ENCODE measurements at regions of chr9 and their contacts with region 1.

Region 1: GRCh38 chr9:112898872-112899311 is 8.2 kb upstream of the SLC46A2 start:
- DNase-seq: no peak
- H3K4me3 Mint-ChIP-seq: no peak overlapping the region
- H3K27ac Mint-ChIP-seq: no peak overlapping the region
- H3K4me1 Mint-ChIP-seq: peaks cover 11% of the 10 kb centered on the region
- H3K27me3 Mint-ChIP-seq: peaks cover 9% of the 10 kb centered on the region
- CTCF ChIP-seq: no peak

Region 2: DNA sequence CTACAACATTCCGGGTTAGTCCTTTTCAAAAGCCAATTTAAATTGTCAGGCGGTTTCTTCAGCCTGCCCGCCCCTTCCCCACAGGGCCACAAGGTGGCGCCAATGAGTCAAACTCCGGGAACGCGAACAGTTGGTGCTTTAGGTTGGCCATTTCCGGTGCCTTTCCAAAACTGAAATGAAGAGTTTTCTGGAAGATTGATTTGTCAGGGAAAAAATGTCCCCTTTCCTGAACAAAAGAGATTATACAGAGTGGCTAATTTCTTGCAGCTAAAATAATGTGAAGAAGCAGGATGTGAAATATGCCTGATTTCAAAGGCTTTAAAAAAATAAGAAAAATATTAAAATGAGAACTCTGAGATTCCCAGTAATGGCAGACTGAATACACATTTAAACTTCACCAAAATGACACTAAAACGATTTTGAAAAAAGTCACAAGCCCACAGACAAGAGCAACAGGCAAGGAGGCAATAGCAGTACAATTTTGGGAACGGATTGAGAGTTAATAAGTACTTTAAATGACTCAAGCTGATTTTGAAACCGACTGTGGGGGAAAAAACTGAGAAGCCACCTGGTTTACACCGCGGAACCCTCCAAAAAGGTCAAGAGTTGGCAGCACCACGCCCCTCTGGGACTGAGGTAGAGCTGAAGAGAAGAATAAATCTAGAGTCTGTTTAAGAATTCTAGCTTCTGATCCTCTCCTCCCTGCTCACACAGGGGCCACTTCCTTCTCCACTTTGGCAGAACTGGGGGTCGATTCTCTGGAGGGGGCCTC is 53.9 kb before region 1 on chr9:
- CTCF ChIA-PET with region 1: interaction called, 6 read pairs
- intact Hi-C with region 1: loop called (anchors 1 kb)
- DNase-seq: peak; percentile 79
- H3K4me3 Mint-ChIP-seq: no peak overlapping the region
- H3K27ac Mint-ChIP-seq: no peak overlapping the region
- H3K4me1 Mint-ChIP-seq: peaks cover 11% of the 10 kb centered on the region
- H3K27me3 Mint-ChIP-seq: no peaks in the 10 kb centered on the region
- CTCF ChIP-seq: peak; percentile 77